ENCODE measurements at regions of chr10 and their contacts with region 1.

Region 1: GRCh38 chr10:97445722-97446639 is at the starts of genes EXOSC1 and ZDHHC16:
- DNase-seq: peak; percentile 94
- H3K4me3 ChIP-seq: peak within 1 kb of the TSS; percentile 69 to 89 (median 77)
- H3K27ac ChIP-seq: peak within 1 kb of the TSS; percentile 77 to 83 (median 81)
- H3K4me1 ChIP-seq: peaks cover 0 to 35% (median 31%) of the 10 kb centered on the region in 4 donors
- H3K27me3 ChIP-seq: no peaks in the 10 kb centered on the region
- CTCF ChIP-seq: no peak
- EP300 ChIP-seq: no peak
- POLR2A ChIP-seq: peak in 1 of 2 donors; percentile 39
- total RNA-seq, gene EXOSC1: 29.1 to 40.0 (median 38.7) TPM
- total RNA-seq, gene ZDHHC16: 15.7 to 36.3 (median 24.0) TPM

Region 2: GRCh38 chr10:97355571-97355975 is 90.4 kb before region 1 on chr10:
- intact Hi-C with region 1: no loop called
- DNase-seq: no peak
- H3K4me3 ChIP-seq: no peak overlapping the region
- H3K27ac ChIP-seq: no peak overlapping the region
- H3K4me1 ChIP-seq: no peaks in the 10 kb centered on the region
- H3K27me3 ChIP-seq: no peaks in the 10 kb centered on the region
- CTCF ChIP-seq: peak in 3 of 4 experiments; percentile 35 to 48 (median 38)
- EP300 ChIP-seq: no peak
- POLR2A ChIP-seq: no peak

Region 3: DNA sequence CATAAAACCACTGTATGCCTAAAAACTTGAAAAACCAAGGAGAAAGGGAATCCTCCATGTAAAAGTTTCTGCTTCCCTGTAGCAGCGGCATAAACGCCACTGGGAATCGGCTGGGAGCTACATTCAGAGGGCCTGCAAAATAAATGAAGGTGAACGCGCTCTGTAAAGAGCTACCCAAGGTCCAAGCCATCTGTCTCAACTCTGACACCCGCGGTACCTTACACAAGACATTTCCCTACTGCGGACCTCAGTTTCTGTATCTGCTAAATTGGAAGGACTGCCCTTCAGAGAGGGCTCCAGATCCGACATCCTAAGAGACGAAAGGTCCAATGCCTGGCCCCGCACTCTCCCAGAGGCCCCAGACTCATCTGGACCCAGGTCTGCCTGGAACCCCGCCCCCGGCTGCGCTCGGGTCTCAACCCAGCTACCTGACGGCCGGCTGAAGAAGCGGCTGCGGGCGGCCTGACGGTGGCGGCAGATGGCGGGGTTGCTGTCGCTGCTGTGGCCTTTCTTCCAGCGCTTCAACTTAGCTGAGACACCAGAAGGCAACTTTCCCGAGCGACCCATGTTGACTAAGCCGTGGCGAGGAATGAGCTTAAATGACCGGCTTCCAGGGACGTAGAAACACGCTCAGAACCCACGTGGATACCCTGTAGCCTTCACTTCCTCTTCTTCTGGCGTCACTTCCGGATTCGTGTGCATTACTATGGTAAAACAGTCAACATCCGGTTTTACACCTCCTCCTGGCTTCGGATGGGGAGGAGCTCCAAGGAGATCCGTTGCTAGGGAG is 45.1 kb before region 1 on chr10 and contains the start of gene RRP12:
- intact Hi-C with region 1: loop called (anchors 1 kb)
- DNase-seq: peak; percentile 95
- H3K4me3 ChIP-seq: peak within 1 kb of the TSS; percentile 37 to 86 (median 74)
- H3K27ac ChIP-seq: peak within 1 kb of the TSS; percentile 65 to 82 (median 72)
- H3K4me1 ChIP-seq: peaks cover 0 to 19% (median 17%) of the 10 kb centered on the region in 4 donors
- H3K27me3 ChIP-seq: no peaks in the 10 kb centered on the region
- CTCF ChIP-seq: no peak
- EP300 ChIP-seq: peak in 1 of 4 donors; percentile 6
- POLR2A ChIP-seq: no peak
- total RNA-seq, gene RRP12: 5.9 to 17.4 (median 9.8) TPM

Region 4: GRCh38 chr10:97425964-97426775 is 19.8 kb before region 1 on chr10 and contains the start of gene PGAM1:
- intact Hi-C with region 1: loop called (anchors 2 kb)
- DNase-seq: peak; percentile 98
- H3K4me3 ChIP-seq: peak within 1 kb of the TSS; percentile 84 to 96 (median 90)
- H3K27ac ChIP-seq: peak within 1 kb of the TSS; percentile 91 to 93 (median 92)
- H3K4me1 ChIP-seq: peaks cover 0 to 30% (median 29%) of the 10 kb centered on the region in 4 donors
- H3K27me3 ChIP-seq: no peaks in the 10 kb centered on the region
- CTCF ChIP-seq: peak in 1 of 4 experiments; percentile 35
- EP300 ChIP-seq: peak in 1 of 4 donors; percentile 48
- POLR2A ChIP-seq: peak; percentile 60
- total RNA-seq, gene PGAM1: 188 to 306 (median 224) TPM

Region 5: DNA sequence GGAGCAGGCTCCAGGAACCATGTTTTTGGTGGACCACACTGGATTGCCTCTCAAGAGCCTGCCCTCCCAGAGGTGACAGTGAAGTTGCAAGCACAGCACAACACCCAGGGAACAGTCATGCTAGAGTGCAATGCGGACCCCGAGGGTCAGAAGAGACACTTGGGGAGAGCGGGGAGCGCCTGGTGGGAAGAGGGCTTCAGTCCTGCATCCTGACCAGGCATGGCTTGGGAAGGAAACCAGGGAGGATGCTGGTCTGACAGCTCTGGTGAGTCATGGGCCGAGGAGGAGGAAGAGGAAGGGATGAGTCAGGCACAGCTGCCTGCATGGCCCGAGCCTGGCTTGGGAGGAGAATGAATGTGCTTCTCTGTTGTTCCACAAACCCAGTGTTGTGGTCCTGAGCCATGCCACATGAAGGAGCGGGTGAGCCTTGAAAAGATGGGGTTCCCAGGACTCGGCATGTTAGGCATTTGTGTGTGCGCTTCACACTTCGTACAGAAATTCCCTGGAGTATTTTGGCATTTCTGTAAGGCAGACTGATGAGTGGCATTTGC is 97.1 kb after region 1 on chr10:
- intact Hi-C with region 1: no loop called
- DNase-seq: peak; percentile 93
- H3K4me3 ChIP-seq: no peak overlapping the region
- H3K27ac ChIP-seq: peak overlapping the region; percentile 77 to 88 (median 81)
- H3K4me1 ChIP-seq: peaks cover 0 to 37% (median 32%) of the 10 kb centered on the region in 4 donors
- H3K27me3 ChIP-seq: no peaks in the 10 kb centered on the region
- CTCF ChIP-seq: no peak
- EP300 ChIP-seq: no peak
- POLR2A ChIP-seq: no peak